GM12878 (cell line): ENCODE measurements at regions of chr16 and their contacts with region 1.

Region 1: GRCh38 chr16:11297492-11298142 is 16.5 kb upstream of the PRM1 start:
- DNase-seq: peak; percentile 92
- ATAC-seq: peak; percentile 91
- H3K4me3 ChIP-seq: peak overlapping the region; percentile 30; the same call in 1 of the 2 replicates
- H3K27ac ChIP-seq: peak overlapping the region; percentile 91
- H3K4me1 ChIP-seq: peaks cover 57% of the 10 kb centered on the region
- H3K27me3 ChIP-seq: no peaks in the 10 kb centered on the region
- CTCF ChIP-seq: peak in 1 of 3 experiments; percentile 26; a peak in 2 of 6 replicates
- EP300 ChIP-seq: peak; percentile 86 to 94
- POLR2A ChIP-seq: peak; percentile 58
- RAD21 ChIP-seq: 0 out of 2 replicates have a peak, but pooled peaks have one; percentile 13

Region 2: DNA sequence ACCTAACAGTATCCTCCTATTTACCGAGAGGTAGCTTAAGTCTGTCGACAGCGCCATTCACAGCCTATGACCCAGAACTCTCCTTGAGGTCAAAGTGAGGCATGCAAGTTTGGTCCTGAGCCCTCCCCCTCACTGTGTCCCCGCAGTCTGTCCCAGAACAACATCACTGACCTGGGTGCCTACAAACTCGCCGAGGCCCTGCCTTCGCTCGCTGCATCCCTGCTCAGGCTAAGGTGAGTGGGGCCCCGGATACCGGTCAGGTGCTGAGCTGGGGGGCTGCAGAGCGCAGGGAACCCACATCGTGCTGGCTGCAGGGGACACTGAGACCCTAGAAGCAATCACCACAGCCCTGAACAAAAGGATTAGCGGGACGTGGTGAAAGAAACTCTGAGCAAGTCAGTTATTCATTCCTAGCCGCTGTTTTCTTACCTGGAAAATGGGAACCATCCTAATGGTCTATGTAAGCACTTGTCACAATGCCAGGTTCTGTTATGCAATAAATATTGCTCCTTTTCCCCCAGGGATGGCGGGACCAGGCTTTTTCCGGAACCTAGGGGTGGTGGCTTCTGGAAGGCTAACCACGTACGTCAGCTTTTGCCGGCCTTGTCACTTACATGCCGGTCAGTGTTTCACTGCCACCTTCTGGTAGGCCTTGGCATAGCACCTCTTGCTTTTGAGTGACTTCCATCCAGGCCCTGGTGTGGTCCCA is 379.2 kb before region 1 on chr16:
- CTCF ChIA-PET with region 1: no interaction called
- POLR2A ChIA-PET with region 1: no interaction called
- RAD21 ChIA-PET with region 1: no interaction called
- SMC1A ChIA-PET with region 1: no interaction called
- in situ Hi-C with region 1: no loop called
- intact Hi-C with region 1: no loop called
- DNase-seq: peak; percentile 77
- ATAC-seq: peak; percentile 89
- H3K4me3 ChIP-seq: no peak overlapping the region
- H3K27ac ChIP-seq: peak overlapping the region; percentile 4; the same call in 1 of the 2 replicates
- H3K4me1 ChIP-seq: peaks cover 25% of the 10 kb centered on the region
- H3K27me3 ChIP-seq: no peaks in the 10 kb centered on the region
- CTCF ChIP-seq: peak; percentile 91 to 99 (median 99)
- EP300 ChIP-seq: no peak
- POLR2A ChIP-seq: peak; percentile 50; the same call in 1 of the 2 replicates
- RAD21 ChIP-seq: peak; percentile 97

Region 3: GRCh38 chr16:11076259-11077018 is 221.2 kb before region 1 on chr16:
- CTCF ChIA-PET with region 1: no interaction called
- POLR2A ChIA-PET with region 1: no interaction called
- RAD21 ChIA-PET with region 1: interaction called, 4 read pairs
- SMC1A ChIA-PET with region 1: interaction called, 3 read pairs
- in situ Hi-C with region 1: no loop called
- intact Hi-C with region 1: loop called (anchors 5 kb)
- DNase-seq: peak; percentile 79
- ATAC-seq: peak; percentile 64
- H3K4me3 ChIP-seq: no peak overlapping the region
- H3K27ac ChIP-seq: peak overlapping the region; percentile 65
- H3K4me1 ChIP-seq: peaks cover 46% of the 10 kb centered on the region
- H3K27me3 ChIP-seq: no peaks in the 10 kb centered on the region
- CTCF ChIP-seq: no peak
- EP300 ChIP-seq: 0 out of 4 replicates have a peak, but pooled peaks of 1 of the 2 experiments have one; percentile 10
- POLR2A ChIP-seq: no peak
- RAD21 ChIP-seq: no peak

Region 4: DNA sequence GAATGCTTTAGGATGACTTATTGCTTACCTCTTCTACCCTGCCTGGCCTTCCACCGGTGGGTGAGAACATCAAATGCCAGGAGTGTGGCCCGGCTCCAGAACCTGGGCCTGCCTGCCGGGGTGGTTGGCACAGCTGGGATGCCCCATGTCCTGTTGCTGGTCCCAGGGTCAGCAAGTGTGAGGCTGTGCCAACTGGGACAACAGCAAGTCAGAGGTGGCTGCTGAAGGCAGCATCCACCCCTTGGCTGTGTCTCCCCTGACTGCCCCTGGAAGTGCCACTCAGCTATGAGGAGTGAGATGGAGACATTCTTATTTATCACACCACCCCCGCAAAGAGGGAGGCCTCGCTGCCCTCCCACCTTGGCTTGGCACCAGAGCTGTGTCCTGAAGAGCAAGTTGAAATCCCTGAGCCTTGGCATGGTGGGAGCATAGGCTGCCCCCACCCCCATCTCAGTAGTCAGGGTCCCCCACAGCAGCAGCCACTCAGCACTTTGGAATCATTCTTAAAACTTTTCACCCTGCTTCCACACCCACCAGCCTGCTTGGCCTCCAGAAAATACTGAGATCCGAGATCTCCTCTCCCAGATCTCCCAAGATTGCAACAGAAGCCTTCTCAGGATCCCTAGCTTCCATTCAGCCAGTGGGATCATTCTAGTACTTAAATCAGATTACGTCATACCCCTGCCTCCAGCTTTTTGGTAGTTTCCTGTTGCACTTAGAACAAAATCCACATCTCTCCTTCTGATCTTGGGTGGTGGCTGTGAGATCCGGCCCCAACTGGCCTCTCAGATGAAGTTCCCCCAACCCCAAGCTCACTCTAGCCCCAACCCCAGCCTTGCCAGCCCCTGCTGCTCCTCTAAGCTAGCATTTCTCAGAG is 169.1 kb before region 1 on chr16:
- CTCF ChIA-PET with region 1: no interaction called
- POLR2A ChIA-PET with region 1: no interaction called
- RAD21 ChIA-PET with region 1: no interaction called
- SMC1A ChIA-PET with region 1: no interaction called
- in situ Hi-C with region 1: no loop called
- intact Hi-C with region 1: no loop called
- DNase-seq: no peak
- ATAC-seq: no peak
- H3K4me3 ChIP-seq: no peak overlapping the region
- H3K27ac ChIP-seq: no peak overlapping the region
- H3K4me1 ChIP-seq: peaks cover 13% of the 10 kb centered on the region
- H3K27me3 ChIP-seq: no peaks in the 10 kb centered on the region
- CTCF ChIP-seq: no peak
- EP300 ChIP-seq: no peak
- POLR2A ChIP-seq: no peak
- RAD21 ChIP-seq: no peak

Region 5: DNA sequence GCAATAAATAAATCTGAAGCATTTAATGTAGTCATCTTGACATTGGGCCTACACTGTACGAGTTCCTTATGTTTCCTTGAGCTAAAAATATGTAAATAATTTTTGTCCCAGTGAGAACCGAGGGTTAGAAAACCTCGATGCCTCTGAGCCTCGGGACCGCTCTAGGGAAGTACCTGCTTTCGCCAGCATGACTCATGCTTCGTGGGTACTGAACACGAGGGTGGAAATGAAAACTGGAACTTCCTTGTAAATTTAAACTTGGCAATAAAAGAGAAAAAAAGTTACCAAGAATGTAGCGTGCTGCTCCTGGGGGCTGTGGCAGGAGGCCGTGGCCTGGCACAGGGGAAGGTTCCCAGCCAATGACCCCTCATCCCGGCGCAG is 115.7 kb before region 1 on chr16:
- CTCF ChIA-PET with region 1: no interaction called
- POLR2A ChIA-PET with region 1: no interaction called
- RAD21 ChIA-PET with region 1: interaction called, 14 read pairs
- SMC1A ChIA-PET with region 1: interaction called, 8 read pairs
- in situ Hi-C with region 1: no loop called
- intact Hi-C with region 1: no loop called
- DNase-seq: peak; percentile 64
- ATAC-seq: peak; percentile 37
- H3K4me3 ChIP-seq: no peak overlapping the region
- H3K27ac ChIP-seq: peak overlapping the region; percentile 81
- H3K4me1 ChIP-seq: peaks cover 47% of the 10 kb centered on the region
- H3K27me3 ChIP-seq: no peaks in the 10 kb centered on the region
- CTCF ChIP-seq: no peak
- EP300 ChIP-seq: peak in 1 of 2 experiments; percentile 70; a peak in 1 of 4 replicates
- POLR2A ChIP-seq: peak; percentile 15; the same call in 1 of the 2 replicates
- RAD21 ChIP-seq: no peak

Region 6: DNA sequence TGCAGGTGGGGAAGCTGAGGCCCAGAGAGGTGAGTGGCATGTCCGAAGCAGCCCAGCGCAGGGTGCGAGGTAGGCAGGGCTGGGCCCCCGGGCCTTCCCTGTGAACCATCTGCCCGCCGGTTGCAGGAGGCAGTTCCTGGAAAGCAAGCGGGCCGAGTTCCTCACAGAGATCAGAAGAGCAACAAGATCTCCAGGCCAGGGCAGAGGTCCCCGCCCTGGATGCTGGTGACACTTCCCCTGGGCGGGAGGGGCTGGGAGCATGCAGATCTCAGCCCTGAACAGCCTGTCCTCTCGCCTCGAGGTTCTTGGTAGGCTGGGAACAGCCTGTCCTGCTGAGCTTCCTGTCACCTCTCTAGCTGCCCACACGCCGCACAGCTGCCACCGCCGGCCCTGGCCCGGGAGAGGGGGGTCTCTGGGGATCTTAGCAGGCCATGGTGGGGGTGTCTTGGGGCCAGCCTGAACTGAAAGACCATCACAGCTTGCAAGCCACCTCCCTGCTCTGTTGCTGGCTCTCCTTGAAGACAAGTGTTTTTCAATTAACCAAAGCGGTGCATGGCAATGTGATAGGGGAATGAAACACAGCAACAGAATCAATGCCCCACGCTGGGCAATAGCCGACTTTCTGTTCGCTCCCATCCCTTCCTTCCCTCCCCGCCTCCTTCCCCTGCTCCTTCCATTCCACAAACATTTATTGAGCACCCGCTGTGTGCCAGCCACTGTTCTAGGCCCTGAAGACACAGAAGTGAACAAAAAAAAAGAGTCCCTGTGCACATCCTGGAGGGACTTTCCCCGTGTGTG is 73.3 kb before region 1 on chr16:
- CTCF ChIA-PET with region 1: interaction called, 3 read pairs
- POLR2A ChIA-PET with region 1: interaction called, 12 read pairs
- RAD21 ChIA-PET with region 1: interaction called, 13 read pairs
- SMC1A ChIA-PET with region 1: interaction called, 13 read pairs
- in situ Hi-C with region 1: no loop called
- intact Hi-C with region 1: no loop called
- DNase-seq: peak; percentile 57
- ATAC-seq: peak; percentile 75
- H3K4me3 ChIP-seq: peak overlapping the region; percentile 19; the same call in 1 of the 2 replicates
- H3K27ac ChIP-seq: peak overlapping the region; percentile 94
- H3K4me1 ChIP-seq: peaks cover 28% of the 10 kb centered on the region
- H3K27me3 ChIP-seq: no peaks in the 10 kb centered on the region
- CTCF ChIP-seq: no peak
- EP300 ChIP-seq: no peak
- POLR2A ChIP-seq: peak; percentile 55
- RAD21 ChIP-seq: no peak

Region 7: GRCh38 chr16:11283820-11284248 is 13.8 kb before region 1 on chr16:
- CTCF ChIA-PET with region 1: interaction called, 3 read pairs
- POLR2A ChIA-PET with region 1: interaction called, 6 read pairs
- RAD21 ChIA-PET with region 1: interaction called, 26 read pairs
- SMC1A ChIA-PET with region 1: interaction called, 40 read pairs
- in situ Hi-C with region 1: no loop called
- intact Hi-C with region 1: no loop called
- DNase-seq: no peak
- ATAC-seq: no peak
- H3K4me3 ChIP-seq: no peak overlapping the region
- H3K27ac ChIP-seq: no peak overlapping the region
- H3K4me1 ChIP-seq: peaks cover 10% of the 10 kb centered on the region
- H3K27me3 ChIP-seq: no peaks in the 10 kb centered on the region
- CTCF ChIP-seq: no peak
- EP300 ChIP-seq: no peak
- POLR2A ChIP-seq: no peak
- RAD21 ChIP-seq: no peak

Region 8: GRCh38 chr16:11328172-11329070 is 30.8 kb after region 1 on chr16:
- CTCF ChIA-PET with region 1: interaction called, 15 read pairs
- POLR2A ChIA-PET with region 1: interaction called, 9 read pairs
- RAD21 ChIA-PET with region 1: interaction called, 29 read pairs
- SMC1A ChIA-PET with region 1: interaction called, 26 read pairs
- in situ Hi-C with region 1: no loop called
- intact Hi-C with region 1: loop called (anchors 1 kb)
- DNase-seq: peak; percentile 95
- ATAC-seq: peak; percentile 84
- H3K4me3 ChIP-seq: peak overlapping the region; percentile 56
- H3K27ac ChIP-seq: peak overlapping the region; percentile 89
- H3K4me1 ChIP-seq: peaks cover 48% of the 10 kb centered on the region
- H3K27me3 ChIP-seq: no peaks in the 10 kb centered on the region
- CTCF ChIP-seq: peak in 2 of 3 experiments; percentile 4 to 6; a peak in 1 of 6 replicates
- EP300 ChIP-seq: peak; percentile 59 to 93
- POLR2A ChIP-seq: peak; percentile 78
- RAD21 ChIP-seq: peak; percentile 23; the same call in 1 of the 2 replicates

Region 9: GRCh38 chr16:11379420-11379819 is 81.8 kb after region 1 on chr16:
- CTCF ChIA-PET with region 1: no interaction called
- POLR2A ChIA-PET with region 1: interaction called, 8 read pairs
- RAD21 ChIA-PET with region 1: interaction called, 25 read pairs
- SMC1A ChIA-PET with region 1: interaction called, 3 read pairs
- in situ Hi-C with region 1: no loop called
- intact Hi-C with region 1: no loop called
- DNase-seq: peak; percentile 71
- ATAC-seq: peak; percentile 98
- H3K4me3 ChIP-seq: no peak overlapping the region
- H3K27ac ChIP-seq: peak overlapping the region; percentile 41
- H3K4me1 ChIP-seq: peaks cover 12% of the 10 kb centered on the region
- H3K27me3 ChIP-seq: no peaks in the 10 kb centered on the region
- CTCF ChIP-seq: no peak
- EP300 ChIP-seq: peak; percentile 80 to 88
- POLR2A ChIP-seq: 0 out of 2 replicates have a peak, but pooled peaks have one; percentile 30
- RAD21 ChIP-seq: 0 out of 2 replicates have a peak, but pooled peaks have one; percentile 12